B cell (primary cell): ENCODE measurements at regions of chr5 and their contacts with region 1.

Region 1: GRCh38 chr5:132500931-132501630 is 10.5 kb upstream of the IRF1 start:
- DNase-seq: peak; percentile 92
- ATAC-seq: peak; percentile 53
- H3K4me3 ChIP-seq: no peak overlapping the region
- H3K4me3 Mint-ChIP-seq: no peak overlapping the region
- H3K27ac ChIP-seq: peak overlapping the region; percentile 78 to 85
- H3K27ac Mint-ChIP-seq: peak overlapping the region; percentile 97
- H3K4me1 ChIP-seq: peaks cover 19 to 27% of the 10 kb centered on the region in 2 donors
- H3K4me1 Mint-ChIP-seq: peaks cover 37% of the 10 kb centered on the region
- H3K27me3 ChIP-seq: no peaks in the 10 kb centered on the region
- H3K27me3 Mint-ChIP-seq: no peaks in the 10 kb centered on the region
- CTCF ChIP-seq: peak; percentile 90

Region 2: DNA sequence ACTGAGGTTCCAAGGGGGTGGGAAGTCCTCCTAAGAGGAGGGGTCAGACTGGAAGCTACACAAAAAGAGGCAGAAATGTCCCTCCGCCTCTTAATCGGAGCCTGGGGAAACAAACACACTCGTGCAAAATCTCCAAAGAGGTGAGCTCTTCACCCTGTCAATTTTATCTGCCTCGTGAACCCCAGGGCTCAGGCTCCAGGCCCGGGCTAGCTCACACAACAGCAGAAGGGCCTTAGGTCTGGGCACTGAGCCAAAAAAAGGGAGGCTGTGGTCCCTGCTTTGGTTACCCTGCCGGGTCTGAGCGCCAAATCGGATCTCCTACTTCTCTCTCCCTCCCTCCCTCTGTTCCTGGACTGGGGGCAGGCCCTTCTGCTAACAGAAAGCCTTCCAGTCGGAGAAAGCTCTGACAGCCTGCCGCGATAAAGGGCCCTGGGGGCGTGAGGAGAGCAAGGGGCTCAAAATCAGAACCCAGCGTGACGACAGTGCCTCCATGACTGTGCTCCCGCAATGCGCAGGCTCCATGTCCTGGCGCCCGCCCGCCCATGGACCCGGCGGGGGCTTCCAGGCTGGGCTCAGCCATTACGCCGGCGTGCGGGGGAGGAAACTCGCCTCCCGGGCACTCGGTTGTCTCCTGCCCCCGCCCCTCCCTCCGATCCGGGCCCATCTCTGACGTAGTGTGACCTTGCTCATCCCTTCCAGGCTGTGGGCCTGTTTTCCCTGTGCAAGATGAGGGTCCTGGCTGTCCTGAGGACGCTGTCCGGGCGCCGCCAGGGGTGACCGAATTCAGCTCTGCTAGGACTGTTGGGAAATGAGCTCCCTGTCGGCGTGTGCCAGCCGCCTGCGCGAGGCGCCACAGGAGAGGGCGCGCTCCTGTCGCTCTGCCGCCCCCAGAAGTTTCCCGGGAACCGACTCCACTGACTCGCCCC is 207.8 kb before region 1 on chr5:
- CTCF ChIA-PET with region 1: no interaction called
- POLR2A ChIA-PET with region 1: no interaction called
- intact Hi-C with region 1: loop called (anchors 10 kb)
- DNase-seq: peak; percentile 55
- ATAC-seq: peak; percentile 34
- H3K4me3 ChIP-seq: peak overlapping the region; percentile 22 to 69 (median 57)
- H3K4me3 Mint-ChIP-seq: peak overlapping the region; percentile 92
- H3K27ac ChIP-seq: peak overlapping the region in 1 of 2 donors; percentile 28
- H3K27ac Mint-ChIP-seq: peak overlapping the region; percentile 41
- H3K4me1 ChIP-seq: peaks cover 15 to 23% of the 10 kb centered on the region in 2 donors
- H3K4me1 Mint-ChIP-seq: peaks cover 21% of the 10 kb centered on the region
- H3K27me3 ChIP-seq: peaks cover 0 to 42% (median 25%) of the 10 kb centered on the region in 4 experiments
- H3K27me3 Mint-ChIP-seq: peaks cover 53% of the 10 kb centered on the region
- CTCF ChIP-seq: no peak

Region 3: GRCh38 chr5:132426525-132427138 is 74.4 kb before region 1 on chr5:
- CTCF ChIA-PET with region 1: interaction called, 121 read pairs
- POLR2A ChIA-PET with region 1: interaction called, 38 read pairs
- intact Hi-C with region 1: no loop called
- DNase-seq: peak; percentile 64
- ATAC-seq: peak; percentile 41
- H3K4me3 ChIP-seq: peak overlapping the region in 2 of 5 experiments; percentile 8 to 56
- H3K4me3 Mint-ChIP-seq: peak overlapping the region; percentile 80
- H3K27ac ChIP-seq: peak overlapping the region; percentile 90 to 94
- H3K27ac Mint-ChIP-seq: peak overlapping the region; percentile 93
- H3K4me1 ChIP-seq: peaks cover 99 to 100% of the 10 kb centered on the region in 2 donors
- H3K4me1 Mint-ChIP-seq: peaks cover 97% of the 10 kb centered on the region
- H3K27me3 ChIP-seq: no peaks in the 10 kb centered on the region
- H3K27me3 Mint-ChIP-seq: no peaks in the 10 kb centered on the region
- CTCF ChIP-seq: no peak

Region 4: GRCh38 chr5:132473019-132473531 is 28.0 kb before region 1 on chr5:
- CTCF ChIA-PET with region 1: interaction called, 38 read pairs
- POLR2A ChIA-PET with region 1: interaction called, 58 read pairs
- intact Hi-C with region 1: no loop called
- DNase-seq: peak; percentile 88
- ATAC-seq: peak; percentile 86
- H3K4me3 ChIP-seq: no peak overlapping the region
- H3K4me3 Mint-ChIP-seq: peak overlapping the region; percentile 83
- H3K27ac ChIP-seq: peak overlapping the region; percentile 81 to 93
- H3K27ac Mint-ChIP-seq: peak overlapping the region; percentile 99
- H3K4me1 ChIP-seq: peaks cover 46 to 75% of the 10 kb centered on the region in 2 donors
- H3K4me1 Mint-ChIP-seq: peaks cover 78% of the 10 kb centered on the region
- H3K27me3 ChIP-seq: no peaks in the 10 kb centered on the region
- H3K27me3 Mint-ChIP-seq: no peaks in the 10 kb centered on the region
- CTCF ChIP-seq: no peak

Region 5: DNA sequence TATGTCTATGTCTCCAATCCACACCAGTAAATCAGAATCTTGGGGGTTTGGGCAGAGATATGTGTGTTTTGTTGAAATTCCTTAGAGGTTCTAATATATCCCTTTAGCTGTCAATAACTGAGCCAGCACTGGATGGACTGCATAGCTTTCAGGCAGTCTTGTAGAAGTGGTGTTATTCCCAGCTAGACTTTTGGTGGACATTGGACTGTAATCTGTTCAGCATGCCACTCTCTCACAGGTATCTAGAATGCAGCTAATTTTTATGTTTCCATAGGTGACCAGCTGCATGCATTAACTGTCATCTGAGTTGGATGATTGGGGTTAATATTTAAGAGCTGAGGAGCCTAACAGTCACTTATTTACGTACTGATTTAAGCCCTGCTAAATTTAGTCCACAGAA is 111.8 kb after region 1 on chr5:
- CTCF ChIA-PET with region 1: no interaction called
- POLR2A ChIA-PET with region 1: no interaction called
- intact Hi-C with region 1: no loop called
- DNase-seq: no peak
- ATAC-seq: no peak
- H3K4me3 ChIP-seq: no peak overlapping the region
- H3K4me3 Mint-ChIP-seq: no peak overlapping the region
- H3K27ac ChIP-seq: no peak overlapping the region
- H3K27ac Mint-ChIP-seq: no peak overlapping the region
- H3K4me1 ChIP-seq: no peaks in the 10 kb centered on the region
- H3K4me1 Mint-ChIP-seq: no peaks in the 10 kb centered on the region
- H3K27me3 ChIP-seq: no peaks in the 10 kb centered on the region
- H3K27me3 Mint-ChIP-seq: no peaks in the 10 kb centered on the region
- CTCF ChIP-seq: no peak

Region 6: GRCh38 chr5:132820162-132820754 is 319.2 kb after region 1 on chr5:
- CTCF ChIA-PET with region 1: interaction called, 66 read pairs
- POLR2A ChIA-PET with region 1: interaction called, 6 read pairs
- intact Hi-C with region 1: loop called (anchors 1 kb)
- DNase-seq: peak; percentile 89
- ATAC-seq: peak; percentile 89
- H3K4me3 ChIP-seq: peak overlapping the region in 3 of 5 experiments; percentile 23 to 39 (median 28)
- H3K4me3 Mint-ChIP-seq: peak overlapping the region; percentile 55
- H3K27ac ChIP-seq: no peak overlapping the region
- H3K27ac Mint-ChIP-seq: no peak overlapping the region
- H3K4me1 ChIP-seq: peaks cover 27% of the 10 kb centered on the region in 2 donors
- H3K4me1 Mint-ChIP-seq: peaks cover 13% of the 10 kb centered on the region
- H3K27me3 ChIP-seq: peaks cover 0 to 54% (median 25%) of the 10 kb centered on the region in 4 experiments
- H3K27me3 Mint-ChIP-seq: peaks cover 21% of the 10 kb centered on the region
- CTCF ChIP-seq: peak; percentile 88